ENCODE measurements at regions of chr6 and their contacts with region 1.

Region 1: DNA sequence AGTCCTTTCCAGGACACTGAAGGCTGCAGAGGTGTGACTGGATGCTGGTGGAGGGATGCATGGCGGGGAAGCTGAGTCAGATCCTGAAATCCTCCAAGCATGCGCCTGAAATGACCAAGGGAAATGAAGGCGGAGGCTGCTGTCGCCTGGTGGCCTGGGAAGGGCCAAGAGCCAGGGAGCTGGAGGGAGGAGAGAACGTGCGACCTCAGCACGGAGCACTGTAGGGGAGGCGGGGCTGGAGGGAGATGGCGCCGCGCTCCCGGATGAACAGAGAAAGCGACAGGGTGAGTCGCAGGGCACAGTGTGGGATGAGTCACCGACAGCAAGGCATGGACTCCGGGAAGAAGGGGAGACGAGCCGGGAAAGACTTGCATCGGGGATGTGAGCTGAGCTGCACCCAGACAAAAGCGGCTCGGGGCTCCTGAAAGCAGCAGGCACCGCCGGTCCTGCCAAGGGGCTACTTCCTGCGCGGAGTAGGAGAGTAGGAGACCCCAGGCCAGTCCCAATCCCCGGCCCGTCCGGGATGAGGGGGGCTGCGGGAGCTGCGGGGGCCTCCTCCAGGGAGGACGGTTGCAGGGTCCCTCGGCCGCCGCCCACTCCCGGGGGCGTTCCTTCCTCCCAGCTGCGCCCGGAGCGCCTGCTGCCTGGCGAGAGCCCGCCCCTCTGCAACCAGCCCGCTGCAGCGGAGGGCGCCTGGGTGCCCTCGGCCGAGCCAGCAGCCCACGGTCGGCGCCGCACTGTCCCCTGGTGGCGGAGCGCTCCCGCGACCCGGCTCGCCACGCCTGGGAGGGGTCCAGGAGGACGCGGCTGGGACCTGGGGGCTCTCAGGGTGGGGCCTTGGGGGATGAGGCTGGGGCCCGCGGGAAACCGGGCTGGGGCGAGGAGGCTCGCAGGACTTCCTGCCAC is 11.0 kb upstream of the NQO2 start:
- DNase-seq: peak; percentile 72 to 95 (median 90)
- H3K4me3 ChIP-seq: peak overlapping the region; percentile 53 to 96 (median 87)
- H3K27ac ChIP-seq: peak overlapping the region; percentile 90 to 100 (median 99)
- H3K27me3 ChIP-seq: no peaks in the 10 kb centered on the region
- CTCF ChIP-seq: peak; percentile 47 to 94 (median 75)

Region 2: DNA sequence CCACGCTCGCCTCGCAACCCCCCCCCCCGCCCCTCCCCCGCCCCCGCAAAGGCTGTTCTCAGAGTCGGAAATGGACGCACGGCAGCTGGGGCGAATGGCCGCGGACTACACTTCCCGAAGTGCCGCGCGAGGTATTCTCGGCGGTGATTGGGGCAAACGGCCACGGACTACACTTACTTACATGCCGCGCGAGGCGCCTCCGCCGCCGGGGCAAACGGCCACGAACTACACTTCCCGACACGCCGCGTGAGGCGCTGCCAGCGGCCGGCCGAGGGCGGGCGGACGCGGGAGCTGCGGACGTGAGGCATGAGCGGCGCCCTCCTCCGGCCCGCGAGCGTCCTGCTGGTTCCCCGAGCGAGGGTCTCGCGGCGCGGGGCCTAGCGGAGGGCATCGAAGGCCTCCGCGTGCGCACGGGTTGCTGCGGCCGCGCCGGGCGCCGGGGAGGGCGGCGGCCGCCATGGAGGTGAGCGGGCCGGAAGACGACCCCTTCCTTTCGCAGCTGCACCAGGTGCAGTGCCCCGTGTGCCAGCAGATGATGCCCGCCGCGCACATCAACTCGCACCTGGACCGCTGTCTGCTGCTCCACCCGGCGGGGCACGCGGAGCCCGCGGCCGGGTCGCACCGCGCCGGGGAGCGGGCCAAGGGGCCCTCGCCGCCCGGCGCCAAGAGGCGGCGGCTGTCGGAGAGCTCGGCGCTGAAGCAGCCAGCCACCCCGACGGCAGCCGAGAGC is 223.3 kb before region 1 on chr6 and contains the start of gene WRNIP1:
- intact Hi-C with region 1: loop called in 1 of 2 experiments (anchors 5 kb)
- DNase-seq: peak; percentile 98 to 100 (median 99)
- H3K4me3 ChIP-seq: peak within 1 kb of the TSS; percentile 64 to 97 (median 87)
- H3K27ac ChIP-seq: peak within 1 kb of the TSS; percentile 86 to 99 (median 97)
- H3K27me3 ChIP-seq: no peaks in the 10 kb centered on the region
- CTCF ChIP-seq: peak; percentile 18 to 87 (median 60)
- total RNA-seq, gene WRNIP1: 32.1 to 60.1 (median 47.7) TPM

Region 3: DNA sequence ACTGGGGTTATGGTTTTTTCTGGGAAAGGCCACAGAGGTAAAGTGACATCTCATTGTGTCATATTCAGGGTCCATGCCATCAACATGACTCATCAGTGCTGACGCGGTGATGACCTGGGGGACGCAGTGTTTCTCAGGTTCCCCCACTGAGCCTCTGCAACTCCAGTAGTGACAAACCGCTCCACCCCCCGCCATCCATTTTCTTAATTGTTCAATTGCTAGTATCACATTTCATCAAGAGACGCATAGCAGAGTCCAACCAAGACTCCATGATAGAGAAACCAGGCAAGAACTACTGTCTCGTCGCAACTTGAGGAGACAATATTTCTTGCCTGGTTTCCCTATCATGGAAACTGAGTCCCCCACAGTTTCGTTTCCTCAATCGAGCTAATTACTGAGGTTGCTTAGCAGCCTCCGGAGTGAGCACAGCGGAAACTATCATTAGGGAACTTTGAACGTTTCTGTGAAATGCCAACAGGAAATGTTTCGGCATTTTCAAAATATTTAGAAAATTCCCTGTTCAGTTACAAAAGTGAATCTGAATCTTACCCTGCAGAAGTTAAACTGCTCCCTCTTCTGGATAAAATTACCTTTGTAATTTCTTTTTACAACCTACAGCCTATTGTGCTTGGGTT is 134.8 kb before region 1 on chr6:
- intact Hi-C with region 1: loop called (anchors 2 to 5 kb)
- DNase-seq: no peak
- H3K4me3 ChIP-seq: peak overlapping the region in 54 of 59 donors; percentile 5 to 64 (median 44)
- H3K27ac ChIP-seq: peak overlapping the region in 54 of 59 donors; percentile 3 to 83 (median 63)
- H3K27me3 ChIP-seq: no peaks in the 10 kb centered on the region
- CTCF ChIP-seq: peak; percentile 24 to 69 (median 51)

Region 4: DNA sequence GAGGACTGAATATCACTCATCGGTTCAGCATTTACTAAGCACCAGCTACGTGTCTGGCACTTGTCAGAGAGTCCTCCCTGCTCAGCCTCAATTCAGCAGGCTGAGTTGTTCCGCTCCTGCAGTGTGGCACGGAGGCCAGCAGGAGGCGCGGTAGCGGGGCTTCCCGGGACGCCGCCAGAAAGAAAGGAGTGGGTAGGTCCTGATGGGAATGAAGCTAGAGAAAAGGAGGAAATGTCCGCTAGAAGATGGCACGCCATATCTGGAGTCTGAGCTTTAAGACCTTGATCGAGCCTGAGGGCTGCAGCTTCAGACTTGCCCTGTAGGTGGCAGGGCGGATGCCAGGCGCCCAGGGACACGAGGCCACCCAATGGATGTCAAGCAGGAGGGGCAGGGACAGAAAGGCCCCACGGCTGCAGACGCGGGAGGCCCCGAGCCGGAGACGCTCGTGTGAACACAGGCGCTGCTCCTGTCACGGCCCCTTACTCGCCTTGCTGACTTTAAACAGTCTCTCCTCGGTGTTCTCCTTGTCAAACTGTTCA is 36.1 kb before region 1 on chr6:
- intact Hi-C with region 1: loop called (anchors 1 to 2 kb)
- DNase-seq: peak; percentile 48 to 78 (median 69)
- H3K4me3 ChIP-seq: peak overlapping the region in 37 of 59 donors; percentile 0 to 50 (median 24)
- H3K27ac ChIP-seq: peak overlapping the region; percentile 3 to 90 (median 75)
- H3K27me3 ChIP-seq: no peaks in the 10 kb centered on the region
- CTCF ChIP-seq: peak; percentile 67 to 98 (median 94)

Region 5: DNA sequence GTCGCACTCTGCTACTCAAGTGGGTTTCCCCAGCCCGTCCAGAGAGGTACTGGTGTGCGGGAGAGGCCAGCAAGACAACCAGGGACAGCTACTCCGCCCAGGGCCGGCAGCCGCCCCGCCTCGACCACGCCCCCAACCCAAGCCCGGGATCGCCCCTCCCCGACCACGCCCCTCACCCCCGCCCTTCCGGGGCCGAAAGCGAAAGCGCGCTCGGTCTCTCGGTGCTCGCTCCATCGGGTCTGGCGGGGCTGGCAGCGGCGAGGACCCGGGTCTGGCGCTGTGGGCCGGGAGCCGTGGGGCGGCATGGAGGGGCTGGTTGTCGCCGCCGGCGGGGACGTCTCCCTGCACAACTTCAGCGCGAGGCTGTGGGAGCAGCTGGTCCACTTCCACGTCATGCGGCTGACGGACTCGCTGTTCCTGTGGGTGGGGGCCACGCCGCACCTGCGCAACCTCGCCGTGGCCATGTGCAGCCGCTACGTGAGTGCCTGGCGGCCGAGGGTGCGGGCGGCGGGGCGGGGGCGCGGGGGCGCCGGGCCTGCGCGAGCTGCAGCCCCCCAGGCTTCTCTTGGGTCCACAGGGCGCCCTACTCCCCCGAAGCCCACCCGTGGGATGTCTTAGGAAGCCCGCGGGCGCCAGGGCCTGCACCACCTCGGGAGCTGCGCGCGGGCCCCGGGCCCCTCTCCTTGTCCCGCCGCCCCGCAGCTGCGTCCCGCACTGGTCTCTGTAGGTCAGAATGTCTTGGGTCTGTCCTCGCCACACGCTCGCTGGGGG is 270.2 kb after region 1 on chr6 and contains the start of gene PSMG4:
- intact Hi-C with region 1: loop called in 1 of 2 experiments (anchors 10 kb)
- DNase-seq: peak; percentile 82 to 96 (median 90)
- H3K4me3 ChIP-seq: peak within 1 kb of the TSS; percentile 53 to 98 (median 89)
- H3K27ac ChIP-seq: peak within 1 kb of the TSS in 54 of 59 donors; percentile 2 to 92 (median 75)
- H3K27me3 ChIP-seq: no peaks in the 10 kb centered on the region
- CTCF ChIP-seq: peak in 25 of 56 donors; percentile 1 to 47 (median 25)
- total RNA-seq, gene PSMG4: 17.1 to 34.4 (median 25.3) TPM